Dorsolateral prefrontal cortex (tissue), 120 donors: ENCODE measurements at regions of chr10 and their contacts with region 1.

Region 1: GRCh38 chr10:59126261-59126660 is 50.2 kb upstream of the PHYHIPL start:
- DNase-seq: no peak
- H3K4me3 ChIP-seq: no peak overlapping the region
- H3K27ac ChIP-seq: peak overlapping the region in 16 of 59 donors; percentile 4 to 56 (median 20)
- H3K27me3 ChIP-seq: no peaks in the 10 kb centered on the region
- CTCF ChIP-seq: no peak

Region 2: GRCh38 chr10:58998924-58999713 is 127.1 kb before region 1 on chr10:
- intact Hi-C with region 1: loop called in 1 of 2 experiments (anchors 5 kb)
- DNase-seq: peak; percentile 62 to 94 (median 86)
- H3K4me3 ChIP-seq: peak overlapping the region; percentile 3 to 74 (median 57)
- H3K27ac ChIP-seq: peak overlapping the region; percentile 83 to 100 (median 98)
- H3K27me3 ChIP-seq: no peaks in the 10 kb centered on the region
- CTCF ChIP-seq: peak in 9 of 56 donors; percentile 4 to 24 (median 12)

Region 3: DNA sequence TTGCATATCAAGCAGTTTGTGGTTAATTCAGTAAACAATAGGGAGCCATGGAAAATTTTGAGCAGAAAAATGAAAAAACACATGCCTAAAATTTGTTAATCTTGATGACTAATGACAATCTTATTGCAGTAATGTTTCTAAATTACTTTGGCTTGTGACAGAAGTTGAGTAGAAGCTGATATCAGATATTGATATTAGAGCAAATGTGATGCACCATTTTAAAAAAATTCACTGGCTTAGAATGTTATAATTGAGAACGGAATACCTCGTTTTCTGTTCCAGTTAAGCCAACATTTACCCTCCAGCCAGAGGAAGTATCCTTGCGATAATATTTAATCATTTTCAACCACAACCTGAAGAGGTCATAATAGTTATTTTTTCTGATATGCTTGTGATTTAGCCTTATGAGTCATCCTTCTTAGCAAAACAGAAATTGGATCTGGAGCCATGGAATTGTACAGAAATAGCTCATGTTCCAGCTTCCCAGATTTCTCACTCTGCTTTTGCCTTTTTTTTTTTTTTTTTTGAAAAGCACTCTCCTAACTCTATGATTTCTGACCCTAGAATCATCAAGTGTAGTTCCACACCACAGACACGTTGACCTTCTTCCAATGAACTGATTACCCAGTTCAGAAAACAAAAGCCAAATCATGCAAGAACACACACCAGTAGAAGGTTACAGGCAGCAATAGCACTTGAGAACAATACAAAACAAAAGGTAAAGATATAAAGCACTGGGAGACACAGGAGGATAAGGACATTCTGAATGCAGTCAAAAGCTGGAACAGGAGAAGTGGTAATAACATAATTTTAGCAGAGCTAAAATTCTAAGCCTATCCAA is 46.7 kb before region 1 on chr10:
- intact Hi-C with region 1: no loop called
- DNase-seq: no peak
- H3K4me3 ChIP-seq: no peak overlapping the region
- H3K27ac ChIP-seq: peak overlapping the region in 58 of 59 donors; percentile 4 to 87 (median 68)
- H3K27me3 ChIP-seq: no peaks in the 10 kb centered on the region
- CTCF ChIP-seq: no peak